K562 (cell line): ENCODE measurements at regions of chr1 and their contacts with region 1.

Region 1: DNA sequence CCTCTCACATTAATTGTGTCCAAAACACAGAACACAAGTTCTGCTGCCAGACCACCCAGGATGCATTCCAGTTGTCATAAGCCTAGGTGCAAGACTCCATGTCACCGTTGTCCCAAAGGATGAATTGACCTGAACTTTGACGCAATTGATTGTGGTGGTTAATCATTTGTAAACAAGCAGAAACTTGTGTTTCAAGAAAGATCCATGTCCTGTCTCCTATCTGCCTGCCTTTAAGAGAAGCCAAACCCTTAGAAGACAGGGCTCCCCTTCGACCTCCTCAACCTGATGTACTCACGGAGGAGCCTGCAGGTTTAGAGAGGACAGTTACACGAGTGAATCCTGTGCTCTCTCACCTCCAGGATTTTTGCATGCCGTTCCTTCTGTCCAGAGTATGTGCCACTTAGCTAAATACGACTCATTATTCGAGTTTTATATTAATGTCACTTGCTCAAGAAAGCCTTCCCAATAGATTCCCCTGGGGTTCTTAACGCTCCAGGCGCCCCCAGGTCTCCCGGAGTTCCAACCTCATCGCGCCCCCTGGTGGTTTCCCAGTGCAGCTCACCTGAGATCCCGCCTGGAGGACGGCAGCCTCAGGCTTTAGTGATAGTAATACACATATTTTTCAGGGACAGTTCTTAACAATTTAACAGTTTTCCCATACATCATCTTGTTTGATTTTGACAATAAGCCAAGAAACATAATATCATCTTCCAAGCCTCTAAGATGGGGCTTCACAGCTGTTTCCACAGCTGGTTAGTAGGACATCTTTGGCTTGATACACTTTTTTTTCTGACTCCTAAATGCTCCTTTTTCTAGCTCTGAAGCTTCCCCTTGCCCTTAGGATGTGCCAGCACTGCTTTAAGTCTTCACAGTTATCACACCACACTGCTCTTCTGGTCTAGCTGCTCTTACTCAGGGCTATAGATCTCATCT is 2.4 kb upstream of the C8B start:
- DNase-seq: peak; percentile 53 to 73 (median 70)
- ATAC-seq: peak; percentile 91
- H3K4me3 ChIP-seq: no peak overlapping the region
- H3K27ac ChIP-seq: no peak overlapping the region
- H3K4me1 ChIP-seq: no peaks in the 10 kb centered on the region
- H3K27me3 ChIP-seq: 0 out of 5 replicates have a peak, but pooled peaks cover 0 to 3% of the 10 kb centered on the region in 2 experiments
- CTCF ChIP-seq: peak; percentile 66 to 76 (median 68)
- EP300 ChIP-seq: no peak
- POLR2A ChIP-seq: no peak
- RAD21 ChIP-seq: peak in 1 of 2 experiments; percentile 59; a peak in 2 of 4 replicates

Region 2: DNA sequence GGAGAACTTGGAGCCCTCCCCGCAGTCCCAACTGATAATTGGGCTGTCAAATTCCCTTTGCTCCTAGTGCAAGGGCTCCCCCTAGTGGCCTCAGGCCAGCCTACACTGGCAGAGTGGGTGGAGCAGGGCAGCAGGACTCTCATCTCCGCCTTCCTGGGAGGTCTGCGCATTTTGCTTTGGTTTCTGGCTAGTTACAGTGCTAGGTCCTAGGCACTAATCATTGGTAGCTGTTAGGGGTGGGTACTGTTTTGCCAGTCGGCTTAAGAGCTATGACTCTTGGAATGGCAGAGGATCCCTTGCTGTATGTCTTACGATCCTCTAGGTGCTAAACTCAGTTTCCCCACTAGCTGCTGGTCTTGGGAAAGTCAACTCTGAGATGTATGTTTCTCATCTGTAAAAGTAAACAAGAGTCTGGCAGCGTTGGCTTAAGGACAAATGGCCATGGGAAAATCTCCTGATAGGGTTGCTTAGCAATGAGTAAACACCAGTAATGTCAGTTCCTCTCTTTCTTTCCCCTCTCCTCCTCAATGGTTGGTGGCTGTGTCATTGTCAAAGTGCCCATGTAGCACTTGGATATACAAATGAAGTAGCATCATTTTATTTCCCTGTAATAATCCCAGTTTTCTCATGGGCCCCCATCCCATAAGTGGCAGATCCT is 146.9 kb before region 1 on chr1:
- CTCF ChIA-PET with region 1: no interaction called
- POLR2A ChIA-PET with region 1: no interaction called
- in situ Hi-C with region 1: loop called (anchors 10 kb)
- intact Hi-C with region 1: no loop called
- DNase-seq: peak; percentile 80 to 85 (median 81)
- ATAC-seq: peak; percentile 99
- H3K4me3 ChIP-seq: no peak overlapping the region
- H3K27ac ChIP-seq: no peak overlapping the region
- H3K4me1 ChIP-seq: no peaks in the 10 kb centered on the region
- H3K27me3 ChIP-seq: peaks cover 0 to 8% of the 10 kb centered on the region in 2 experiments; a peak in 2 of 5 replicates
- CTCF ChIP-seq: peak; percentile 82 to 94 (median 88)
- EP300 ChIP-seq: no peak
- POLR2A ChIP-seq: no peak
- RAD21 ChIP-seq: peak; percentile 47 to 80

Region 3: DNA sequence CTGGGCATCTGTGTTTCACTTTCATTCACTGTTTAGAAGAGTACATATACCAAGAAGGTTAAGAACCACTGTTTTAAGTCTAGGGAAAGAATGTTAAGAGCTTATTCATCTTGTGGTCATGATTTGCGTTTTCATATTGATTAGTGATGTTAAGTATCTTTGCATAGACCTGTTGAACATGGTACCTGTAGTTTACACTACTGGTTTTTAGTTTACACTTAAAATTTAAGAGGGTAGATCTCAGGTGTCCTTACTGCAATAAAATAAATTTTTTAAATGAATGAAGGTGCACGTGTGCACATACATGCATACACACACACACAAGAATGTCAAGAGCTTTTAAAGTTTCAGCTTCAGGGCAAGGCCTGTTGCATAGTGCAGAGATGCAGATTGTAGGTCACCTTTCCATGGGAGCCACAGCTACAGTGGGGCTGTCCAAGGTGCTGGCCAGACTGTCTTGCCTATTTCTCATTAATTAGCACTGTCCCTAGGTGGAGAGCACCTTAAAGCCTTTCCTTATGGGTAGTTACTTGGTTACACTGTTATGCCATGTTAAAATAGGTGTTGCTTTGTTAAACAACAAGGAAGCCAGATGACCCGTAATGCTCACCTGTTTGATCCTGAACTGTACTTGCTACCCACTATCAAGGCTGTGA is 998.7 kb after region 1 on chr1:
- CTCF ChIA-PET with region 1: no interaction called
- POLR2A ChIA-PET with region 1: no interaction called
- in situ Hi-C with region 1: no loop called
- intact Hi-C with region 1: no loop called
- DNase-seq: peak in 1 of 4 experiments; percentile 3
- ATAC-seq: no peak
- H3K4me3 ChIP-seq: no peak overlapping the region
- H3K27ac ChIP-seq: no peak overlapping the region
- H3K4me1 ChIP-seq: no peaks in the 10 kb centered on the region
- H3K27me3 ChIP-seq: no peaks in the 10 kb centered on the region
- CTCF ChIP-seq: no peak
- EP300 ChIP-seq: no peak
- POLR2A ChIP-seq: no peak
- RAD21 ChIP-seq: no peak